ENCODE measurements at regions of chr17 and their contacts with region 1.

Region 1: GRCh38 chr17:41717408-41718286 is 5.5 kb downstream of the GAST start:
- DNase-seq: peak; percentile 85
- H3K4me3 ChIP-seq: peak overlapping the region in 2 of 3 experiments; percentile 2 to 6
- H3K27ac ChIP-seq: peak overlapping the region; percentile 67
- H3K4me1 ChIP-seq: peaks cover 16% of the 10 kb centered on the region
- H3K27me3 ChIP-seq: no peaks in the 10 kb centered on the region
- CTCF ChIP-seq: no peak

Region 2: GRCh38 chr17:41758601-41759000 is 41.0 kb after region 1 on chr17:
- CTCF ChIA-PET with region 1: no interaction called
- dilution Hi-C with region 1: loop called (anchors 5 kb)
- in situ Hi-C with region 1: no loop called
- intact Hi-C with region 1: no loop called
- DNase-seq: no peak
- H3K4me3 ChIP-seq: no peak overlapping the region
- H3K27ac ChIP-seq: no peak overlapping the region
- H3K4me1 ChIP-seq: no peaks in the 10 kb centered on the region
- H3K27me3 ChIP-seq: no peaks in the 10 kb centered on the region
- CTCF ChIP-seq: no peak